Vagina (tissue), 2 donors: ENCODE measurements at regions of chr1 and their contacts with region 1.

Region 1: GRCh38 chr1:110339407-110340206 is 430 bp downstream of the RBM15 start:
- DNase-seq: no peak
- H3K4me3 ChIP-seq: peak overlapping the region; percentile 67 to 84
- H3K27ac ChIP-seq: peak overlapping the region; percentile 79
- H3K4me1 ChIP-seq: peaks cover 59% of the 10 kb centered on the region
- H3K27me3 ChIP-seq: no peaks in the 10 kb centered on the region
- CTCF ChIP-seq: peak in 2 of 3 experiments; percentile 2 to 52
- POLR2A ChIP-seq: peak in 1 of 2 donors; percentile 79

Region 2: GRCh38 chr1:110407260-110408210 is 67.9 kb after region 1 on chr1 and contains the start of gene LAMTOR5:
- intact Hi-C with region 1: loop called (anchors 5 kb)
- DNase-seq: peak in 1 of 2 donors; percentile 94
- H3K4me3 ChIP-seq: peak within 1 kb of the TSS; percentile 88 to 98
- H3K27ac ChIP-seq: peak within 1 kb of the TSS; percentile 99
- H3K4me1 ChIP-seq: peaks cover 29% of the 10 kb centered on the region
- H3K27me3 ChIP-seq: no peaks in the 10 kb centered on the region
- CTCF ChIP-seq: peak in 1 of 3 experiments; percentile 29
- POLR2A ChIP-seq: peak in 1 of 2 donors; percentile 71
- total RNA-seq, gene LAMTOR5: 66.5 TPM